Panc1 (cell line): ENCODE measurements at regions of chr11 and their contacts with region 1.

Region 1: GRCh38 chr11:8356216-8356615 is 92.5 kb upstream of the LMO1 start:
- DNase-seq: no peak
- ATAC-seq: no peak
- H3K4me3 ChIP-seq: no peak overlapping the region
- H3K27ac ChIP-seq: no peak overlapping the region
- H3K4me1 ChIP-seq: no peaks in the 10 kb centered on the region
- H3K27me3 ChIP-seq: peaks cover 5% of the 10 kb centered on the region
- CTCF ChIP-seq: no peak

Region 2: DNA sequence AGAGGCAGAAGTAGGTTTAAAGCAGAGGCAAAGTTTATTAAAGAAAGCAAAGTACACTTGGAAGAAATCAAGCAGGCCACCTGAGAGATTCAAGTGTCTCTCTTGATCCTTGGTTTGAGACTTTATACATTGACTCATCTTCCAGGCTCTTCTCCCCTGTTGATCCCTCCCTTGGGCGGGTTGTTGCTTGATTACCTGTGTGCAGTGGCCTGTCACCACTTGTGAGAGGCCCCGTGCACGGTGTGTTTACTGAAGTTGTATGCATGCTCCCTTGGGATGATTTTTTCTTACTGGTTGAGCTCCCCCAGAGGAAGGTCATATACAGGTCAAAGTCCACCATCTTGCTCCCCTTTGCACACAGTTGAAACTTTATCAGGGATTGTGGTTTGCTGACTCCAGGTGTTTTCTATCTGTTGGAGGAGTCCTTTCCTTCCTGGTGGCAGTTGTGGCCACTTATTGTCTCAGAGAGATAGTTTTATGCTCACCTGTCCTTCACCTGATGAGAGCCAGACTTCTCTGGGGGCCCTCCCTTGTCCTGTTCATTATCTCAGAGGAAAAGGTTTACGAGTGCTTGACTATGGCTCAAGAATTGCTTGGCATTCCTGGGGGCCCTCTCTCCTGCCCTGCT is 1283.7 kb before region 1 on chr11:
- CTCF ChIA-PET with region 1: no interaction called
- POLR2A ChIA-PET with region 1: no interaction called
- in situ Hi-C with region 1: no loop called
- intact Hi-C with region 1: no loop called
- DNase-seq: no peak
- ATAC-seq: no peak
- H3K4me3 ChIP-seq: no peak overlapping the region
- H3K27ac ChIP-seq: no peak overlapping the region
- H3K4me1 ChIP-seq: no peaks in the 10 kb centered on the region
- H3K27me3 ChIP-seq: 0 out of 2 replicates have a peak, but pooled peaks cover 6% of the 10 kb centered on the region
- CTCF ChIP-seq: no peak

Region 3: DNA sequence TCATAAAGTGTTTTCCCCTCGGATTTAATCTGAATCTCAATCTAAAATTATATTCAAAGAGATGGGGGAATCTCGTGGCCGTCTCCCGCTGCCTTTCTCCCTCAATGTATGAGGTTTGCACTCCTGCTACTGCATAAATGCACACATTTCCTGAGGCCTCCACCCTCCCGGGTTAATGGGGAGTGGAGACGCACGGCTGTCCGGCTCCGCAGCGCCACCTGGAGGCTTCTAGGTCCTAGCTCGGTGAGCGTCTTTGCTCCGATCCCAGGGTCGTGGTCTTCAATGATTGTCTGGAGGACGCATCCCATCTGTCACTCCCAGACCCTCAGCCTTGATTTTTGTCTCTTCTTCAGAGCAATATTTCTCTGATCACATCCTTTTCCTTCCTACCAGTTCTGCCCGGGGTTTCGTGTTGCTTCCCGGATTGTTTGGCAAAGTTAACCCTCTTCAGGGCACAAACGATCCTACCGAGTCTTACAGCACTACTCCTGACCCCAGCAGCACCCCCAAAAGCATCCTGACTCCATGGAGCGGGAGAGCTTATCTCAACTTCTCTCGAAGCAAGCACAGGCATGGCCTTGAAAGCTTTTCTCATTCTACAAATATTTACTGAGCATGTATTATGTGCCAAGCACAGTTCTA is 92.3 kb before region 1 on chr11 and contains the start of gene LMO1:
- CTCF ChIA-PET with region 1: no interaction called
- POLR2A ChIA-PET with region 1: no interaction called
- in situ Hi-C with region 1: no loop called
- intact Hi-C with region 1: no loop called
- DNase-seq: peak; percentile 54
- ATAC-seq: peak; percentile 83
- H3K4me3 ChIP-seq: peak within 1 kb of the TSS; percentile 28 to 49
- H3K27ac ChIP-seq: no peak within 1 kb of the TSS
- H3K4me1 ChIP-seq: peaks cover 12% of the 10 kb centered on the region
- H3K27me3 ChIP-seq: peaks cover 34% of the 10 kb centered on the region
- CTCF ChIP-seq: peak; percentile 99
- total RNA-seq, gene LMO1: not detected

Region 4: DNA sequence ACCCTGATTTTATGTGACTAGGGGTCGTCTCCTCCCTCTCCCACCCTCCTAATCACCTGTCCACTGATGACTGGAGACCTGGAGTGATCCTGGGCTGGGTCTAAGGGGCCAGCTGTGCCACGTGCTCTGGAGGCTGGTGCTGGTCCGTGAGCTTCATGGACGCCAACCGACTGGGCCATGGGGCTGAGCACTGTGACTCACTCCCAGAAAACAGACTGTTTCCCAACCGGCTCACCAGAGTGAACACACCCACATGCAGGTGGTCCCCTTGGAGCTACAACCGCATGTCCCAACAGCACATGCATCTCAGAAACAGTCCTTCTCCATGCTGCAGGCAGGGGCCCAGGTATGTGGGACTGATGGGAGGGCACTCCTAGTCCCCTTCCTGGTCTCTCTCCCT is 78.5 kb before region 1 on chr11:
- CTCF ChIA-PET with region 1: no interaction called
- POLR2A ChIA-PET with region 1: no interaction called
- in situ Hi-C with region 1: no loop called
- intact Hi-C with region 1: no loop called
- DNase-seq: no peak
- ATAC-seq: no peak
- H3K4me3 ChIP-seq: no peak overlapping the region
- H3K27ac ChIP-seq: no peak overlapping the region
- H3K4me1 ChIP-seq: no peaks in the 10 kb centered on the region
- H3K27me3 ChIP-seq: peaks cover 26% of the 10 kb centered on the region
- CTCF ChIP-seq: no peak

Region 5: DNA sequence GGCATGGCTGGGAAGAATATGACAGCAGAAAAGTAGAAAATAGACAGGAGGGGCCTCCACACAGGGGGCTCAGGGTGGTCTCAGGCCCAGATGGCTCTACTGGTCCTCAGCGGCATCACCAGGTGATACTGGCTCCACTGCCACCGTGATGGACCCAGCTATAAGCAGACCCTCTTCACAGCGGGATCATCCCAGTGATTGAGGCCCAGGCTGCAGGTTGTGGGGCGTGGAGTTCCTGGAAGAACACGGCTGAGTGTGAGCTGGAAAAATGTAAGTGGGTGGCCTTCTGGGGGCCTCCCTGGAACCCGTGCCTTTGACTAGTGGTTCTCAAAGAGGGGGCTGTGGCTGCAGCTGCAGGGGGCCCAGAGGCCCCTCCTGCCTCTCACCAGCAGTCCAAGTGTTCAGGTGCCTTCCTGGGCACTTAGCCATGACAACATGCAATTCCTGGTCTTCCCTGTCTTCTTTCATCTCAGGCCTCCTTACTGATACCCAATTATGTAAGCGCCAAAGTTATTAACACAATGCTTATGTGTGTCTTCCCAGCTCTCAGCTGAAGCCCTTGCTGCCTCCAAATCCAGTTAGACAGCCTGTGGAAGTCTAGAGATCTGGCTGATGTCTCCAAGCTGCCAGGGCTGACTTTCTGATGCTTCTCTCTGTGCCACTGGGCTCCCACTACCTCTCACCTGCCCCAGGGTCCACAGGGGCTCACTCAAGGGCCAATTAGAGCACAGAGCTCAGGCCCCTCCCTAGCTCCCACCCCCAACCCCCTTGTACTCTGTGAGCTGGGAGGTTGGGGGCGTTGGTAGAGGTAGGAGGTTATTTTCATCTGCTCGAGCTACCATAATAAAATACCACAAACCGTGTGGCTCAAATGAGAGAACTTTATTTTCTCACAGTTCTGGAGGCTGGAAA is 17.6 kb after region 1 on chr11:
- CTCF ChIA-PET with region 1: no interaction called
- POLR2A ChIA-PET with region 1: interaction called, 10 read pairs
- in situ Hi-C with region 1: no loop called
- intact Hi-C with region 1: no loop called
- DNase-seq: no peak
- ATAC-seq: no peak
- H3K4me3 ChIP-seq: no peak overlapping the region
- H3K27ac ChIP-seq: no peak overlapping the region
- H3K4me1 ChIP-seq: no peaks in the 10 kb centered on the region
- H3K27me3 ChIP-seq: no peaks in the 10 kb centered on the region
- CTCF ChIP-seq: no peak